Caco-2 (cell line): ENCODE measurements at regions of chr14 and their contacts with region 1.

Region 1: GRCh38 chr14:59688224-59689170 is 111.9 kb upstream of the CCDC175 start:
- DNase-seq: peak; percentile 72 to 79
- H3K4me3 ChIP-seq: no peak overlapping the region
- H3K4me3 Mint-ChIP-seq: no peak overlapping the region
- H3K27ac Mint-ChIP-seq: no peak overlapping the region
- H3K4me1 ChIP-seq: no peaks in the 10 kb centered on the region
- H3K4me1 Mint-ChIP-seq: no peaks in the 10 kb centered on the region
- H3K27me3 ChIP-seq: no peaks in the 10 kb centered on the region; the same call in 1 of the 2 replicates
- H3K27me3 Mint-ChIP-seq: peaks cover 8% of the 10 kb centered on the region
- CTCF ChIP-seq: peak; percentile 82 to 85

Region 2: GRCh38 chr14:59632381-59632780 is 56.1 kb before region 1 on chr14:
- CTCF ChIA-PET with region 1: interaction called, 4 read pairs
- POLR2A ChIA-PET with region 1: no interaction called
- intact Hi-C with region 1: loop called (anchors 1 kb)
- DNase-seq: peak in 1 of 2 experiments; percentile 24
- H3K4me3 ChIP-seq: no peak overlapping the region
- H3K4me3 Mint-ChIP-seq: no peak overlapping the region
- H3K27ac Mint-ChIP-seq: no peak overlapping the region
- H3K4me1 ChIP-seq: 0 out of 2 replicates have a peak, but pooled peaks cover 3% of the 10 kb centered on the region
- H3K4me1 Mint-ChIP-seq: no peaks in the 10 kb centered on the region
- H3K27me3 ChIP-seq: no peaks in the 10 kb centered on the region
- H3K27me3 Mint-ChIP-seq: peaks cover 15% of the 10 kb centered on the region
- CTCF ChIP-seq: peak; percentile 25 to 39

Region 3: GRCh38 chr14:59882957-59883356 is 194.5 kb after region 1 on chr14:
- CTCF ChIA-PET with region 1: no interaction called
- POLR2A ChIA-PET with region 1: no interaction called
- intact Hi-C with region 1: no loop called
- DNase-seq: no peak
- H3K4me3 ChIP-seq: no peak overlapping the region
- H3K4me3 Mint-ChIP-seq: no peak overlapping the region
- H3K27ac Mint-ChIP-seq: no peak overlapping the region
- H3K4me1 ChIP-seq: no peaks in the 10 kb centered on the region
- H3K4me1 Mint-ChIP-seq: no peaks in the 10 kb centered on the region
- H3K27me3 ChIP-seq: no peaks in the 10 kb centered on the region
- H3K27me3 Mint-ChIP-seq: peaks cover 9% of the 10 kb centered on the region
- CTCF ChIP-seq: peak; percentile 44 to 45